Panc1 (cell line): ENCODE measurements at regions of chr1 and their contacts with region 1.

Region 1: GRCh38 chr1:155934097-155934935 is at the start of gene KHDC4:
- DNase-seq: peak; percentile 98
- ATAC-seq: peak; percentile 96
- H3K4me3 ChIP-seq: peak within 1 kb of the TSS; percentile 93 to 98
- H3K27ac ChIP-seq: peak within 1 kb of the TSS; percentile 99
- H3K4me1 ChIP-seq: peaks cover 33% of the 10 kb centered on the region
- H3K27me3 ChIP-seq: no peaks in the 10 kb centered on the region
- CTCF ChIP-seq: no peak
- total RNA-seq, gene KHDC4: 80.4 TPM

Region 2: DNA sequence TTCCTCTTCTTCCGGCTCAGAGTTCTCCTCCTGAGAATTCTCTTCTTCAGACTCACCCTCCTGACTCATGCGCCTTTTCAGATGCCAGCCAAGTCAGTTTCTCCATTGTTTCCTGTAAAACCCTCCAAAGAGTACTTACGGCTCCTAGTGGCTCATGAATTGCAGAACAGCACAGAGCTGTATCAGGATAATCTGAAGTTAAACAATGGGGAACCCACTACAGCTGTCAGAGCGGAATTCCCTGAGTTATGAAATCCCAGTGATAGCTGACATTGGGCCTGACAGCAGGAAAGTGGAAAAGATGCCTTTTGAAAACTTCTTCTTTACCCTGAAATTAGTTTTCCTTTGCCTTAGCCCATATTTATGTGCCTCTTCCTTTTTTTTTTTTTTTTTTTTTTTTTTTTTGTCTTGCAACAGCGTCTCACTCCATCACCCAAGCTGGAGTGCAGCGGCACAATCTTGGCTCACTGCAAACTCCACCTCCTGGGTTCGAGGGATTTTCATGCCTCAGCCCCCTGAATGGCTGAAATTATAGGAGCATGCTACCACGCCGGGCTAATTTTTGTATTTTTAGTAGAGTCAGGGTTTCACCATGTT is 285.7 kb before region 1 on chr1:
- CTCF ChIA-PET with region 1: interaction called, 13 read pairs
- POLR2A ChIA-PET with region 1: no interaction called
- in situ Hi-C with region 1: no loop called
- intact Hi-C with region 1: no loop called
- DNase-seq: no peak
- ATAC-seq: peak; percentile 90
- H3K4me3 ChIP-seq: peak overlapping the region; percentile 18 to 31
- H3K27ac ChIP-seq: peak overlapping the region; percentile 20
- H3K4me1 ChIP-seq: peaks cover 27% of the 10 kb centered on the region
- H3K27me3 ChIP-seq: no peaks in the 10 kb centered on the region
- CTCF ChIP-seq: peak; percentile 88

Region 3: DNA sequence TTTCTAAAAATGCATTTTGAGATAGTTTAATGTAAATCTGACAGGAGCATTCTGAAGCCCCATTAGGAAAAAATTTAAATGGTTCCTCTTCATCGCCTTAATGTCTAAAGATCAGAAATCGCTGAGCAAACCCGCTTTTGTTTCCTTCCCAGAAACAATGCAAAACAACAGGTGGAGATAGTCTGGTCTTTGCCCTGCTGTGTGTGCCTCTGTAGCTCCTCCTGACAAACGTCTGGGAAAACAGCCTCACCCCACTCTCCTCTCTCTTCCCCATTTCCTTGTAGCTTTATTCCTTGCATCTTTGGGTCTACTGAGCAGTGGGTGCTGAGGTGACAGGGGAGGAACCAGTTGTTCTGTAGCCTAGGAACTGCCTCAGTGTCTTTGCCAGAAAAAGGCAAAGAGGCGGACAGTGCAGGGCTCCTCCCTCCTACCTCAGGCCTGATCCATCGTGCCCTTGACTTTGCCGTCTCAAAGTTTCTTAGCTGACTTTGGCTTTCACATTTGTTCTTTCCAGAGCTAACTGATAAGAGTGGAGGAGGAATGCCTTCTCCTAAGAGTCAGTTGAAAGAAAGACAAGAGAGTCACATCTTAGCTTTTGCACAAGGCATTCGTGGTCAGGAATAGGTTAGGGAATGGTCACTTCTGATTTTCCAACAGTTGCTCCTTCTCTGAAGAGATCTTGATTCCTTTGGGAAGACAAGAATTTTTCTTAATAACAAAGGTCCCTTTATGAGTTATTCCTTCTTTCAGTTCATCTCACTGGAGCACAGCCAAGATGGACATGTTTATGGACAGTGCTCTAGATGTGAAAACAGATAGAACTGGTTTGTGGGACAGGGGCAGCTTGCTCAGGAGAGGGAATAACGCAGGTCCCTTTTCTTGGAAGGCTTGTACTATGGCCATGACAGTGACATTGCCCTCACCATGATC is 50.0 kb before region 1 on chr1:
- CTCF ChIA-PET with region 1: no interaction called
- POLR2A ChIA-PET with region 1: interaction called, 12 read pairs
- in situ Hi-C with region 1: no loop called
- intact Hi-C with region 1: no loop called
- DNase-seq: no peak
- ATAC-seq: no peak
- H3K4me3 ChIP-seq: no peak overlapping the region
- H3K27ac ChIP-seq: no peak overlapping the region
- H3K4me1 ChIP-seq: no peaks in the 10 kb centered on the region
- H3K27me3 ChIP-seq: no peaks in the 10 kb centered on the region
- CTCF ChIP-seq: no peak

Region 4: GRCh38 chr1:155989242-155990004 is 55.1 kb after region 1 on chr1:
- CTCF ChIA-PET with region 1: interaction called, 16 read pairs
- POLR2A ChIA-PET with region 1: interaction called, 7 read pairs
- in situ Hi-C with region 1: no loop called
- intact Hi-C with region 1: loop called (anchors 1 kb)
- DNase-seq: peak; percentile 74
- ATAC-seq: peak; percentile 91
- H3K4me3 ChIP-seq: no peak overlapping the region
- H3K27ac ChIP-seq: peak overlapping the region; percentile 46; the same call in 1 of the 2 replicates
- H3K4me1 ChIP-seq: peaks cover 2% of the 10 kb centered on the region; the same call in 1 of the 2 replicates
- H3K27me3 ChIP-seq: no peaks in the 10 kb centered on the region
- CTCF ChIP-seq: peak; percentile 97

Region 5: DNA sequence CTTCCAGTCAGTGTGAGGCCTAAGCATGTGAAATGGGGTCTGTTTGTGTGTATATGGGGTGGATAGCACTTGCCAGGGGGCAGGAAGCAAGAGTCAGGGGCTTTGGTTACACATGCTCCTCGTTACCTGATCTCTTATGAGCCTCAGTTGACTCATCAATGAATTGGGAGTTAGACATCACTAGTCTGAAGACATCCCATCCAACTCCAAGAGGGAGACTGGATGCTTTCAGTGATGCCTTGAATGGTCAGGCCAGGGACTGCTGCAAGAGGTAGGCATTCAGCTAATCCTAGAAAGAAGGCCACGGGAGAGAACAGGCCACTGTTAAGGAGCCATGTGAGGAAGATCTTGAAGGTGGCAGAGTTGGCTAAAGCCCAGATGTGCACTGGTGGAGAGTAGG is 132.9 kb after region 1 on chr1:
- CTCF ChIA-PET with region 1: interaction called, 14 read pairs
- POLR2A ChIA-PET with region 1: interaction called, 12 read pairs
- in situ Hi-C with region 1: no loop called
- intact Hi-C with region 1: no loop called
- DNase-seq: no peak
- ATAC-seq: no peak
- H3K4me3 ChIP-seq: no peak overlapping the region
- H3K27ac ChIP-seq: no peak overlapping the region
- H3K4me1 ChIP-seq: no peaks in the 10 kb centered on the region
- H3K27me3 ChIP-seq: no peaks in the 10 kb centered on the region
- CTCF ChIP-seq: no peak

Region 6: DNA sequence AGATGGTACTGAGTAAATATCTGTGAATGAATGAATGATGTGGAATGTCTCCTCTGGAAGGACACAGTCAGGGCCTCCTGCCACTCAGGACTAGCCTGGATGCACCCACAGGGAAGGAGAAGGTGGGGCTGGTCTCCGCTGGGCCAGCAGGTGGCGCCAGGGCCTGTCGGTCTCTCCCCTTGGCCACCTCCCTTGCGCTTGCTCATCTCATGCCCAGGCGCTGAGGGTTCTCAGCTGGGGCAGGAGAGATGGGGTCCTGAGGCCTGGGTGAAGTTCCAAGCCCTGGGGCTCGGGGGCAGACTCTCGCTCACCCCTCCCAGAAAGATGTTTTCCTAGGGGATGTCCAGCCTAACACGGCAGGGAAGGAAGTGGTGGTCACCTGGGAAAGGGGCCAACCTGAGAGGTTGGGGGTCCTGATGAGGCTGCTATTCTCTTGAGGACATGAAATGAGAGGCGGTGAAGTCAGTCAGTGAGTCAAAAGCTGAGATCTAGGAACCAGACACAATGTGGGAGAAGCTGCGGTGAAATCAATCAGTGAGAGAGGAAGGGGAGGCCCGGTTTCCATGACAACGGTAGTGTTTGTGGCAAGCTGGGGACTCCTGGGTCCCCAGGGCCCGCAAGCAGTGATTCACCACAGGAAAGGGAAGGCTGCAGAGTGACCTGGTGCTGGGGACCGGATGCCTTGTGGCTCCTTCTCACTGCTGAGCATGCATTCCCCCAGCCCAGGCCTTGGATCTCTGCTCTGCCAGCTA is 162.5 kb after region 1 on chr1:
- CTCF ChIA-PET with region 1: no interaction called
- POLR2A ChIA-PET with region 1: no interaction called
- in situ Hi-C with region 1: no loop called
- intact Hi-C with region 1: no loop called
- DNase-seq: peak; percentile 71
- ATAC-seq: peak; percentile 98
- H3K4me3 ChIP-seq: no peak overlapping the region
- H3K27ac ChIP-seq: peak overlapping the region; percentile 82
- H3K4me1 ChIP-seq: peaks cover 15% of the 10 kb centered on the region; the same call in 1 of the 2 replicates
- H3K27me3 ChIP-seq: no peaks in the 10 kb centered on the region
- CTCF ChIP-seq: peak; percentile 97